ENCODE measurements at regions of chr20 and their contacts with region 1.

Region 1: GRCh38 chr20:37758332-37758731 is 64.5 kb downstream of the CTNNBL1 start:
- DNase-seq: peak in 1 of 2 experiments; percentile 66
- H3K4me3 ChIP-seq: no peak overlapping the region
- H3K27ac ChIP-seq: no peak overlapping the region
- H3K4me1 ChIP-seq: no peaks in the 10 kb centered on the region
- H3K27me3 ChIP-seq: no peaks in the 10 kb centered on the region
- CTCF ChIP-seq: peak; percentile 55 to 71 (median 68)
- EP300 ChIP-seq: no peak
- POLR2A ChIP-seq: no peak
- RAD21 ChIP-seq: peak; percentile 51 to 62

Region 2: DNA sequence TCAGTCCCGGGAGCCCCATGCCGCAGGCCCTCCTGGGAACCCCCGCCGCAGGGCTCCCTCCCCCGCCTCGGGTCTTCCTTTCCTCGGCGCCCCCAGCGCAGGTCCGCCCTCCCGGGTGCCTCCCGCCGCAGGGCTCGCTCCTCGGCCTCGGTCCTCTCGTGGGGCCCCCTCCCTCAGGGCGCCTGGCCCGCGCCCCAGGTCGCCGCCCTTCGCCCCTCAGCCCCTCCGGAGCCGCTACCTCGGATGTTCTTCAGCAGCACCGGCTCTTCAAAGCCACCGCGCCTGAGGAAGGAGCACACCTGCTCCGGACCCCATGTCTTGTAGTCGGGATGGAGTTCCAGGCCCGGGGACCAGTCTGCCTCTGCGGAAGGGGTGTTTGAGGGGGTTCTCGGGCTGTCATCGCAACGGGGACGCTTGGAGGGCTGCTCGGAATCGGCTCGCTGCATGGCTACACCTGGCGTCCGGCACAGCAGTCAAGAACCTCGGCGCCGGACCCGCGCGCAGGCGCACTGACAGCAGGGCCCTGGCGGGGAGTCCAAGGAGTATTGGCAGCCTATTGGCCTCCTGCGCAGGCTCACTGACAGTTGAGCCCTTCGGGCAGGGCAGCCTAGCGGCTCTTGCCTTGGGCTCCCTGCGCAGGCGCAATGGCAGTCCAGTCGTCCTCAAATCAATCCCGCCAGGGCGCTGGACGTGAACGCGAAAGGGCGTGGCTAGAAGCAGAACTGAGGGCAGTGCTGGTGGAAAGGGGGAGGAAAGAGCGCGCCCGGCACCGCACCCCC is 806.9 kb before region 1 on chr20 and contains the start of gene SAMHD1:
- CTCF ChIA-PET with region 1: no interaction called
- POLR2A ChIA-PET with region 1: no interaction called
- DNase-seq: peak; percentile 95 to 97
- H3K4me3 ChIP-seq: peak within 1 kb of the TSS; percentile 66 to 83 (median 80)
- H3K27ac ChIP-seq: no peak within 1 kb of the TSS
- H3K4me1 ChIP-seq: peaks cover 0 to 16% (median 10%) of the 10 kb centered on the region in 4 experiments; a peak in 4 of 7 replicates
- H3K27me3 ChIP-seq: no peaks in the 10 kb centered on the region; a peak in 1 of 7 replicates
- CTCF ChIP-seq: no peak
- EP300 ChIP-seq: no peak
- POLR2A ChIP-seq: peak in 1 of 2 experiments; percentile 51; a peak in 1 of 3 replicates
- RAD21 ChIP-seq: no peak
- total RNA-seq, gene SAMHD1: 37.1 and 39.5 TPM in 2 replicates

Region 3: DNA sequence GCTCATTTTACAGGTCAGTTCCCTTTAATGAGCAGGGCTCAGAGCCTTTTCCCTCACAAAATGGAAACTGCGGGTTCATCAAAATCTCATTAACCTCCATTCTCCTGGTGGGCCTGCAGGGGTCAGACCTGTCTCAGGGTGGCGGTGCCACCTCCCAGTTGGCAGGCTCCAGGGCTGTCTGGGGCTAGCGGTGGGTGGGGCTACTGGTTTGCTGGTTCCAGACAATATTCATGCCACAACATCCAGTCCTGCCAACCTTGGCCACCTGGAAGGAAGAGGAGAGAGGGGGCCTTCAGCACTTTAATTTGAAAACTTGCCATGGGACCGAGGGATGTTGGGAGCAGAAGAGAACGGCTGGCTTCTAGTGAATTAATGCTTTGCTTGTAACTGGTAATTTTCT is 106.4 kb before region 1 on chr20:
- CTCF ChIA-PET with region 1: no interaction called
- POLR2A ChIA-PET with region 1: no interaction called
- DNase-seq: peak; percentile 34 to 65
- H3K4me3 ChIP-seq: no peak overlapping the region
- H3K27ac ChIP-seq: no peak overlapping the region
- H3K4me1 ChIP-seq: peaks cover 0 to 4% (median 1%) of the 10 kb centered on the region in 4 experiments; a peak in 2 of 7 replicates
- H3K27me3 ChIP-seq: no peaks in the 10 kb centered on the region; a peak in 1 of 7 replicates
- CTCF ChIP-seq: peak; percentile 77 to 87 (median 81)
- EP300 ChIP-seq: no peak
- POLR2A ChIP-seq: no peak
- RAD21 ChIP-seq: peak; percentile 95

Region 4: DNA sequence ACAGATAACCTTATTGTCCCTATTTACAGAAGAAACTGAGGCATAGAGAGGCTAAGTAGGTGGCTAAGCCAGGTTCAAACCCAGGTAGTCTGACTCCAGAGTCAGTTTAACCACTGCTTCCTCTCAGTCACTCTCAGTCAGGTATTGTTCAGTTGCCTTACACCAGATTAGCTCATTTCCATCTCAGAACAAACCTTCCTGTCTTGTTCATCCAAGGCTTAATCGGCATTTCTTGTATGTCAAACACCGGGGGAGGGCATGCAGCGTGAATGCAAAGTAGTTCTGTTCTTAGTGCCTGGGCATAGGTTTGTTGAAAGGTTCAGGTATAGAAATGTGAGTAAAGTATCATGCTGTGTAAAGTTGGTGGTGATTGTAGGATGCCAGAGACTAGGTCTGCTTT is 12.8 kb before region 1 on chr20:
- CTCF ChIA-PET with region 1: interaction called, 11 read pairs
- POLR2A ChIA-PET with region 1: no interaction called
- DNase-seq: no peak
- H3K4me3 ChIP-seq: no peak overlapping the region
- H3K27ac ChIP-seq: no peak overlapping the region
- H3K4me1 ChIP-seq: peaks cover 0 to 4% (median 2%) of the 10 kb centered on the region in 4 experiments; a peak in 1 of 7 replicates
- H3K27me3 ChIP-seq: no peaks in the 10 kb centered on the region
- CTCF ChIP-seq: no peak
- EP300 ChIP-seq: no peak
- POLR2A ChIP-seq: no peak
- RAD21 ChIP-seq: no peak

Region 5: DNA sequence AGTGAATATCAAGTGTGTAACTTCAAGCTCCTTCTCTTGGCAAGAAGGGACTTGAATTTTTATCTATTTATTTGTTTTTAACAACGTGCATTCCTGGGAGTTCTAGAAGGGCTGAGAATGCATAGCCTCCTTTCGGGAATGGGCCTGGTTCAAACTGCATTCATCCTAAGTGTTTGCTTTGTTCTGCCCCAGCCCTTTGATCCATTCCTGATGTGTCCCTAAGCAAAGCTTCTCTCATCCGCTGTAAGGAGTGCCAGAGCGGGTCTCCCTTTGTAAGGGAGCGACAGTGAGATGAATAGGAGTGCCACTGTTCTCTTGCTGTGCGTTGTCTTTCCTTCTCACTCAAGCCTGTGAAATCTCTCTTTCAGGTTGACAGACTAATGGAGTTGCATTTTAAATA is 83.6 kb after region 1 on chr20:
- CTCF ChIA-PET with region 1: interaction called, 14 read pairs
- POLR2A ChIA-PET with region 1: no interaction called
- DNase-seq: no peak
- H3K4me3 ChIP-seq: no peak overlapping the region
- H3K27ac ChIP-seq: no peak overlapping the region
- H3K4me1 ChIP-seq: peaks cover 2 to 14% (median 9%) of the 10 kb centered on the region in 4 experiments; a peak in 5 of 7 replicates
- H3K27me3 ChIP-seq: no peaks in the 10 kb centered on the region
- CTCF ChIP-seq: no peak
- EP300 ChIP-seq: no peak
- POLR2A ChIP-seq: no peak
- RAD21 ChIP-seq: no peak

Region 6: GRCh38 chr20:37890643-37891042 is 132.3 kb after region 1 on chr20:
- CTCF ChIA-PET with region 1: interaction called, 13 read pairs
- POLR2A ChIA-PET with region 1: interaction called, 4 read pairs
- DNase-seq: no peak
- H3K4me3 ChIP-seq: no peak overlapping the region
- H3K27ac ChIP-seq: no peak overlapping the region
- H3K4me1 ChIP-seq: no peaks in the 10 kb centered on the region
- H3K27me3 ChIP-seq: no peaks in the 10 kb centered on the region
- CTCF ChIP-seq: no peak
- EP300 ChIP-seq: no peak
- POLR2A ChIP-seq: no peak
- RAD21 ChIP-seq: no peak